AG04450 (cell line): ENCODE measurements at regions of chr13 and their contacts with region 1.

Region 1: GRCh38 chr13:25286969-25287961 is at the start of gene MTMR6:
- DNase-seq: peak; percentile 71
- H3K4me3 ChIP-seq: peak within 1 kb of the TSS; percentile 89
- H3K27ac ChIP-seq: peak within 1 kb of the TSS; percentile 80
- H3K27me3 ChIP-seq: no peaks in the 10 kb centered on the region
- CTCF ChIP-seq: peak; percentile 94
- polyA plus RNA-seq, gene MTMR6: 16.8 and 25.7 TPM in 2 replicates

Region 2: DNA sequence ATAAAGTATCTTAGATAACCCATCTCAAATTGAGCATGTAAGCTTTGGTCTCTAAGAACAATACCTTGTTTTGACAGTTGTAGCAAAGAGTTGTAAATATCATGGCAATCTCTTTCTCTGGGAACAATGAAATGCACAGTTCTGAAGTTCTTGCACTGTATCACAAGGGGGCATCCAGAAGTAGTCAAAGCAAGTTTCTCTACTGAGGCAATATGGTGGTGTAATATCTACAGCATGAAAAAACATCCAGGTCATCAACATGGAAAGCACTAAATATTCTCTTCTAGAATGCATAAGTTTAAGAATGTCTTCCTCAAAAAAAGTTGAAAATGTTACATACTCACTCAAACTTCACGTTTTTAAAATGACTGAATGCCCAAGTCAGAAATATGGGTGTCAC is 19.6 kb before region 1 on chr13:
- CTCF ChIA-PET with region 1: interaction called, 23 read pairs
- POLR2A ChIA-PET with region 1: no interaction called
- DNase-seq: no peak
- H3K4me3 ChIP-seq: no peak overlapping the region
- H3K27ac ChIP-seq: no peak overlapping the region
- H3K27me3 ChIP-seq: no peaks in the 10 kb centered on the region
- CTCF ChIP-seq: peak; percentile 31; the same call in 1 of the 2 replicates

Region 3: GRCh38 chr13:25301347-25302047 is 14.2 kb after region 1 on chr13 and contains the start of gene NUP58:
- CTCF ChIA-PET with region 1: interaction called, 61 read pairs
- POLR2A ChIA-PET with region 1: no interaction called
- DNase-seq: peak; percentile 87
- H3K4me3 ChIP-seq: peak within 1 kb of the TSS; percentile 87
- H3K27ac ChIP-seq: peak within 1 kb of the TSS; percentile 95
- H3K27me3 ChIP-seq: no peaks in the 10 kb centered on the region
- CTCF ChIP-seq: no peak
- polyA plus RNA-seq, gene NUP58: 33.1 and 46.2 TPM in 2 replicates

Region 4: DNA sequence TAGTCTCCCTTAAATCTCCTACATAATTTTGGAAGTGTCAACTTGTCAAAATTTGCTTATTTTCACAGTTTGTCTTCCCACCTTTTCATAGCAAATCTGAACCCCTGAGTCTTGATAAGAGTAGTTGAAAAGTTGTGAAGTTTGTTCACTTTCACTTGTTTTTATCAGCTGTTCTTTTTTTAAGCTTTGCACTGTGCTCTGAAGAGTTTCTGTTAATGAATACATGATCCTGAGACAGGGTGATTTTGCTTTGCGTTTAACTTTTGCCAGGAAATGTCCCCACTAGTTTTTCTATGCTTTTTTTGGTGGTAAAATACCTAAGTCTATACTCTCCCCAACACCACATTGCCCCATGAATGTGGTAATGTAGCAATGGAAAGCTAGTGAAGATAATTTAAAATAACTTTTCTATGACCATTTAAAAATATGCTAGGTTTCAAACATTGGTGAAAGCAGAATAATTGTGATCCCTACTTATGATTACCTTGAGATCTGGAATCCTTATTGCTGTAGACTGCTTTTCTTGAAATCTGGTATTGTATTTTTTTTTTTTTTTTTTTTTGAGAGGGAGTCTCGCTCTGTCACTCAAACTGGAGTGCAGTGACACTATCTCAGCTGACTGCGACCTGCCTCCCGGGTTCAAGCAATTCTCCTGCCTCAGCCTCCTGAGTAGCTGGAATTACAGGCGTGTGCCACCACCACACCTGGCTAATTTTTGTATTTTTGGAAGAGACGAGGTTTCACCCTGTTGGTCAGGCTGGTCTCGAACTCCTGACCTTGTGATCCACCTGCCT is 19.6 kb after region 1 on chr13:
- CTCF ChIA-PET with region 1: interaction called, 22 read pairs
- POLR2A ChIA-PET with region 1: interaction called, 4 read pairs
- DNase-seq: no peak
- H3K4me3 ChIP-seq: no peak overlapping the region
- H3K27ac ChIP-seq: no peak overlapping the region
- H3K27me3 ChIP-seq: no peaks in the 10 kb centered on the region
- CTCF ChIP-seq: no peak

Region 5: GRCh38 chr13:25319771-25320170 is 32.5 kb after region 1 on chr13:
- CTCF ChIA-PET with region 1: interaction called, 27 read pairs
- POLR2A ChIA-PET with region 1: no interaction called
- DNase-seq: no peak
- H3K4me3 ChIP-seq: no peak overlapping the region
- H3K27ac ChIP-seq: no peak overlapping the region
- H3K27me3 ChIP-seq: no peaks in the 10 kb centered on the region
- CTCF ChIP-seq: no peak

Region 6: GRCh38 chr13:25329706-25330105 is 42.4 kb after region 1 on chr13:
- CTCF ChIA-PET with region 1: interaction called, 27 read pairs
- POLR2A ChIA-PET with region 1: no interaction called
- DNase-seq: no peak
- H3K4me3 ChIP-seq: no peak overlapping the region
- H3K27ac ChIP-seq: no peak overlapping the region
- H3K27me3 ChIP-seq: no peaks in the 10 kb centered on the region
- CTCF ChIP-seq: no peak

Region 7: GRCh38 chr13:25335856-25336255 is 48.6 kb after region 1 on chr13:
- CTCF ChIA-PET with region 1: interaction called, 13 read pairs
- POLR2A ChIA-PET with region 1: no interaction called
- DNase-seq: no peak
- H3K4me3 ChIP-seq: no peak overlapping the region
- H3K27ac ChIP-seq: no peak overlapping the region
- H3K27me3 ChIP-seq: no peaks in the 10 kb centered on the region
- CTCF ChIP-seq: no peak

Region 8: GRCh38 chr13:25352230-25352629 is 65.0 kb after region 1 on chr13:
- CTCF ChIA-PET with region 1: no interaction called
- POLR2A ChIA-PET with region 1: no interaction called
- DNase-seq: no peak
- H3K4me3 ChIP-seq: no peak overlapping the region
- H3K27ac ChIP-seq: no peak overlapping the region
- H3K27me3 ChIP-seq: peaks cover 8% of the 10 kb centered on the region
- CTCF ChIP-seq: no peak

Region 9: DNA sequence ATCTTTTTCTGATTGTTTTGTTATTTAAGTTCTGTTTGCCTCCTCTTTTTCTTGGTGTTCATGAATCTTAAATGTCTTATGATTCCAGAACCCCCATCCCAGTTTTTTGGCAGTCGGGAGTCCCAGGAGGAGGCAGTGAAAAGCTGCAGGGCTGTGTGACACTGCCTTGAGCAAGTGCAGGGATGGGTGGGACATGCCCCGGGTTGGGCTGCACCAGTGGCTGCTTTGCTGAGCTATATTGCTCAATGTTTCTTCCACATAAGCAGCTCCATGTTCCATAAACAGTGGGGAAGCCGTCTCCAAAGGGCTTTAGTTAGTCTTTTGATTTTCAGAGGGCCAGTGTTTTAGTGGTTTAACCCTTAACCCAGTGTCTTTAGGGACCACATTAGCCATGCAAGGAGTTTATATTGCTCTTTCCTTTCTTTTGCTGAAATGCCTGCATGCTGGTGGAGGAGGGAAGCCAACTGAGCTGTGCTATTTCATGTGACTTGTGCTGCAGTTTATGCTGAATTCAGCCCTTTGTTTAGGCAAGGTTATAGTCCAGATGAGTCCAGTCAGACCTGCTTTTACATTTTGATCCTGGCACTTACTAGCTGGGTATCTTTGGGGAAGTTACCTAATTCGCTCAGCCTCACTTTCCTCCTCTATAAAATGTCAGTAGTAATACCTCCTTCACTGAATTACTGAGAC is 97.6 kb after region 1 on chr13:
- CTCF ChIA-PET with region 1: no interaction called
- POLR2A ChIA-PET with region 1: no interaction called
- DNase-seq: no peak
- H3K4me3 ChIP-seq: no peak overlapping the region
- H3K27ac ChIP-seq: no peak overlapping the region
- H3K27me3 ChIP-seq: no peaks in the 10 kb centered on the region
- CTCF ChIP-seq: no peak